Activated naive CD8-positive, alpha-beta T cell treated with anti-CD3 and anti-CD28 coated beads, Interleukin-2, amount 10 ng/mL, durations not matched to agents 7 days and 5 days (primary cell): ENCODE measurements at regions of chr6 and their contacts with region 1.

Region 1: GRCh38 chr6:2876210-2877056 is 26.7 kb downstream of the SERPINB9 start:
- DNase-seq: no peak
- ATAC-seq: peak; percentile 18
- H3K4me3 Mint-ChIP-seq: peak overlapping the region; percentile 93
- H3K27ac Mint-ChIP-seq: peak overlapping the region; percentile 98
- H3K4me1 Mint-ChIP-seq: peaks cover 50% of the 10 kb centered on the region
- H3K27me3 Mint-ChIP-seq: no peaks in the 10 kb centered on the region

Region 2: GRCh38 chr6:1200718-1201105 is 1675.7 kb before region 1 on chr6:
- POLR2A ChIA-PET with region 1: no interaction called
- DNase-seq: no peak
- ATAC-seq: no peak
- H3K4me3 Mint-ChIP-seq: no peak overlapping the region
- H3K27ac Mint-ChIP-seq: no peak overlapping the region
- H3K4me1 Mint-ChIP-seq: peaks cover 2% of the 10 kb centered on the region
- H3K27me3 Mint-ChIP-seq: no peaks in the 10 kb centered on the region

Region 3: GRCh38 chr6:2738373-2738979 is 138.0 kb before region 1 on chr6:
- POLR2A ChIA-PET with region 1: no interaction called
- DNase-seq: no peak
- ATAC-seq: peak; percentile 60
- H3K4me3 Mint-ChIP-seq: no peak overlapping the region
- H3K27ac Mint-ChIP-seq: no peak overlapping the region
- H3K4me1 Mint-ChIP-seq: peaks cover 5% of the 10 kb centered on the region
- H3K27me3 Mint-ChIP-seq: peaks cover 7% of the 10 kb centered on the region

Region 4: DNA sequence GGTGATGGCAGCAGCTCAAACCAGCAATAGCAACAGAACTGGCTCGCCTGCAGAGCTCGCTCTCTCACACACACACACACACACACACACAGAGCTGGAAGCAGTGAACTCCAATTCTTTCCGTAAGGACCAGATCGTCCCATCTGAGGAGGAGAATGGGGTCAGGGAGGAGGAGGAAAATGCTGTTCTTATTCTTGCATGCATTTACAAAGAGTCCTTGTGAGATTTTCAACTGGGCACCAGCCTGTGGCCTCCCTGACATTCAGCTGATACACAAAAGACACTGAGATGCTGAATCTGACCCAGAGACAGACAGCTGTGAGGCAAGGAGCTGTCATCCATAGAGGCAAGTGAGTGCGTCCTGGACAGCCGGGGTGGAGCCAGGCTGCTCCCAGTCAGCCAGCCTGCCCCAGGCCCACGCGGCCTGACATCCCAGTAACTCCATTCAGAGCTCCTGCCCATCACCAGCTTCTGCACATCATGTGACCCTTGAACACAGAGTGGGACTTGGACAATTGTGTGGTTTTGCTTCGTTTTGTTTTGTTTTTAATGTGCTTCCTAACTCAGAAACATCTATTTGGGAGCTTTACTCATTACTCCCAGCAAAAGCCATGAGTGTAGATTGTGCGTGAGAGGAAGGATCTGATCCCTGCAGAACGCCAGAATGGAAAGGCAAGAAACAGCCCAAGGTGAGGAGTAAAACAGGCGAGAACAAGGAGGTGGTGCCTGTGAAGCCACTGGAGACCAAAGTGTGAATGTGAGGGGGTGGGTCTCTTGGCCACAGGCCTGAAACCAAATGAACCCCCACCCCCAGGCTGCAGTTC is 24.6 kb after region 1 on chr6:
- POLR2A ChIA-PET with region 1: interaction called, 11 read pairs
- DNase-seq: no peak
- ATAC-seq: no peak
- H3K4me3 Mint-ChIP-seq: peak overlapping the region; percentile 99
- H3K27ac Mint-ChIP-seq: peak overlapping the region; percentile 40
- H3K4me1 Mint-ChIP-seq: peaks cover 47% of the 10 kb centered on the region
- H3K27me3 Mint-ChIP-seq: peaks cover 2% of the 10 kb centered on the region